ENCODE measurements at regions of chr4 and their contacts with region 1.

Region 1: GRCh38 chr4:108135549-108136209 is 33.1 kb downstream of the LEF1 start:
- DNase-seq: peak in 1 of 35 experiments; percentile 9
- ATAC-seq: peak in 3 of 4 experiments; percentile 9 to 37 (median 13)
- H3K4me3 ChIP-seq: peak overlapping the region in 1 of 2 donors; percentile 36
- H3K4me3 Mint-ChIP-seq: peak overlapping the region; percentile 60 to 83 (median 65)
- H3K27ac ChIP-seq: peak overlapping the region; percentile 29
- H3K27ac Mint-ChIP-seq: peak overlapping the region; percentile 89 to 94
- H3K4me1 ChIP-seq: peaks cover 47 to 77% of the 10 kb centered on the region in 2 experiments
- H3K4me1 Mint-ChIP-seq: peaks cover 92 to 96% (median 93%) of the 10 kb centered on the region in 3 donors
- H3K27me3 ChIP-seq: no peaks in the 10 kb centered on the region
- H3K27me3 Mint-ChIP-seq: no peaks in the 10 kb centered on the region

Region 2: DNA sequence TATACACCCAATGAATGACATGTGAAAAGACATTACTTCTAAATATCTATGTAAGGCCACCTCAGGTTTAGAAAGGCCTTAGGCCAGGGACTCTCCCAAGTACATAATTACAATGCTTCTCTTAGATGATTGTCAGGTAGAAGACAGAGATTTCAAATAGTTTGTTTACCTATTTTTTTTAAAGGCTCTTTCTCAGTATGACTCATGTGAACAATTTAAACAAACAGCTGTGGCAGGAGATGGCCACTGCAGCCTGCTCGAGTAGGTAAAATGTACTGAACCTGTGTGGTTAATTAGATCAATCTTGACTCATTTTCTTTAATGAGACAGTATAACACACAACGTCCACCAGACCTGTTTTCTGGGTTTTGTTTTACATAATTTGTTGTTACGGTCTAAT is 17.2 kb before region 1 on chr4:
- CTCF ChIA-PET with region 1: interaction called, 5 to 6 read pairs
- POLR2A ChIA-PET with region 1: interaction called, 5 to 14 read pairs
- DNase-seq: peak in 11 of 35 experiments; percentile 22 to 60 (median 34)
- ATAC-seq: peak; percentile 14 to 54 (median 30)
- H3K4me3 ChIP-seq: no peak overlapping the region
- H3K4me3 Mint-ChIP-seq: peak overlapping the region; percentile 35 to 67 (median 44)
- H3K27ac ChIP-seq: peak overlapping the region; percentile 66
- H3K27ac Mint-ChIP-seq: peak overlapping the region; percentile 92 to 93
- H3K4me1 ChIP-seq: peaks cover 51 to 95% of the 10 kb centered on the region in 2 experiments
- H3K4me1 Mint-ChIP-seq: peaks cover 91 to 94% (median 93%) of the 10 kb centered on the region in 3 donors
- H3K27me3 ChIP-seq: no peaks in the 10 kb centered on the region
- H3K27me3 Mint-ChIP-seq: no peaks in the 10 kb centered on the region

Region 3: GRCh38 chr4:108287834-108288413 is 152.2 kb after region 1 on chr4:
- CTCF ChIA-PET with region 1: no interaction called
- POLR2A ChIA-PET with region 1: no interaction called
- DNase-seq: no peak
- ATAC-seq: no peak
- H3K4me3 ChIP-seq: no peak overlapping the region
- H3K4me3 Mint-ChIP-seq: no peak overlapping the region
- H3K27ac ChIP-seq: no peak overlapping the region
- H3K27ac Mint-ChIP-seq: no peak overlapping the region
- H3K4me1 ChIP-seq: peaks cover 0 to 6% of the 10 kb centered on the region in 2 experiments
- H3K4me1 Mint-ChIP-seq: peaks cover 17 to 18% (median 17%) of the 10 kb centered on the region in 3 donors
- H3K27me3 ChIP-seq: no peaks in the 10 kb centered on the region
- H3K27me3 Mint-ChIP-seq: no peaks in the 10 kb centered on the region

Measured in T-cell (primary cell).